ENCODE measurements at regions of chr12 and their contacts with region 1.

Region 1: GRCh38 chr12:103833891-103834290 is 7.1 kb downstream of the NT5DC3 start:
- DNase-seq: no peak
- H3K4me3 ChIP-seq: no peak overlapping the region
- H3K27ac ChIP-seq: no peak overlapping the region
- H3K4me1 ChIP-seq: peaks cover 0 to 11% (median 4%) of the 10 kb centered on the region in 4 experiments
- H3K27me3 ChIP-seq: peaks cover 0 to 2% (median 0%) of the 10 kb centered on the region in 5 experiments

Region 2: GRCh38 chr12:103819312-103819711 is 14.6 kb before region 1 on chr12:
- CTCF ChIA-PET with region 1: interaction called, 10 read pairs
- POLR2A ChIA-PET with region 1: no interaction called
- DNase-seq: no peak
- H3K4me3 ChIP-seq: no peak overlapping the region
- H3K27ac ChIP-seq: no peak overlapping the region
- H3K4me1 ChIP-seq: no peaks in the 10 kb centered on the region
- H3K27me3 ChIP-seq: no peaks in the 10 kb centered on the region

Region 3: DNA sequence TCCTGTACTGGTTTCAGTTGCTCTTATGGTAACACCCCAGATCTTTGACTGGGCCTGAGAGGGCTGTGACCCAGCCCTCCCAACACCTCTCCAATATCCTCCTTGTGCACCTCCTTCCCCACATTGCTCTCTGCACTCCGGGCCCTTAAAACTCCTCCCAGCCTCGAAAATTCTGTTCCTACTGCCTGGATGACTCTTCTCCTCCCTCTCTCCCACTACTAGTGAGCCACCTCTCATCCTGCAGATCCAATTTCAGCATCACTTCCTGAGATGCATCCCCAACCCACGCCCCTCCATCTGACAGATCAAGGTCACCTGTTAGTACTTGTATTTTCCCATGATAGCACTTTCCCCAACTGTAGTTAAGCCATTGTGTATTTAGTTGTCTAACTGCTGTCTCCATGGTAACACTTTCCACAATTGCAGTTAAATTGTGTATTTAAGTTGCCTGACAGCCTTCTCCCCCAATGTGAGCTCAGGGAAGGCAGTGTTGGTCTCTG is 18.7 kb after region 1 on chr12:
- CTCF ChIA-PET with region 1: no interaction called
- POLR2A ChIA-PET with region 1: no interaction called
- DNase-seq: peak in 2 of 3 donors; percentile 52 to 62
- H3K4me3 ChIP-seq: no peak overlapping the region
- H3K27ac ChIP-seq: no peak overlapping the region
- H3K4me1 ChIP-seq: peaks cover 0 to 5% (median 0%) of the 10 kb centered on the region in 4 experiments
- H3K27me3 ChIP-seq: no peaks in the 10 kb centered on the region